T-cell (primary cell): ENCODE measurements at regions of chr16 and their contacts with region 1.

Region 1: GRCh38 chr16:63695347-63695746 is 1426.5 kb downstream of the CDH11 start:
- DNase-seq: no peak
- ATAC-seq: no peak
- H3K4me3 ChIP-seq: no peak overlapping the region
- H3K4me3 Mint-ChIP-seq: no peak overlapping the region
- H3K27ac ChIP-seq: no peak overlapping the region
- H3K27ac Mint-ChIP-seq: no peak overlapping the region
- H3K4me1 ChIP-seq: no peaks in the 10 kb centered on the region
- H3K4me1 Mint-ChIP-seq: no peaks in the 10 kb centered on the region
- H3K27me3 ChIP-seq: no peaks in the 10 kb centered on the region
- H3K27me3 Mint-ChIP-seq: no peaks in the 10 kb centered on the region

Region 2: GRCh38 chr16:64292953-64293352 is 597.6 kb after region 1 on chr16:
- CTCF ChIA-PET with region 1: interaction called in 1 of 2 experiments, 10 read pairs
- POLR2A ChIA-PET with region 1: no interaction called
- DNase-seq: no peak
- ATAC-seq: no peak
- H3K4me3 ChIP-seq: no peak overlapping the region
- H3K4me3 Mint-ChIP-seq: no peak overlapping the region
- H3K27ac ChIP-seq: no peak overlapping the region
- H3K27ac Mint-ChIP-seq: no peak overlapping the region
- H3K4me1 ChIP-seq: no peaks in the 10 kb centered on the region
- H3K4me1 Mint-ChIP-seq: no peaks in the 10 kb centered on the region
- H3K27me3 ChIP-seq: no peaks in the 10 kb centered on the region
- H3K27me3 Mint-ChIP-seq: no peaks in the 10 kb centered on the region